ENCODE measurements at regions of chr9 and their contacts with region 1.

Region 1: GRCh38 chr9:76458903-76459690 is at the start of gene GCNT1:
- DNase-seq: peak; percentile 97
- H3K4me3 ChIP-seq: peak within 1 kb of the TSS; percentile 63 to 81 (median 70)
- H3K27ac ChIP-seq: peak within 1 kb of the TSS; percentile 71 to 87 (median 84)
- H3K4me1 ChIP-seq: peaks cover 0 to 49% (median 27%) of the 10 kb centered on the region in 4 donors
- H3K27me3 ChIP-seq: no peaks in the 10 kb centered on the region
- CTCF ChIP-seq: peak in 4 of 5 experiments; percentile 32 to 63 (median 36)
- EP300 ChIP-seq: no peak
- POLR2A ChIP-seq: peak; percentile 91
- total RNA-seq, gene GCNT1: 12.7 to 52.0 (median 27.8) TPM

Region 2: DNA sequence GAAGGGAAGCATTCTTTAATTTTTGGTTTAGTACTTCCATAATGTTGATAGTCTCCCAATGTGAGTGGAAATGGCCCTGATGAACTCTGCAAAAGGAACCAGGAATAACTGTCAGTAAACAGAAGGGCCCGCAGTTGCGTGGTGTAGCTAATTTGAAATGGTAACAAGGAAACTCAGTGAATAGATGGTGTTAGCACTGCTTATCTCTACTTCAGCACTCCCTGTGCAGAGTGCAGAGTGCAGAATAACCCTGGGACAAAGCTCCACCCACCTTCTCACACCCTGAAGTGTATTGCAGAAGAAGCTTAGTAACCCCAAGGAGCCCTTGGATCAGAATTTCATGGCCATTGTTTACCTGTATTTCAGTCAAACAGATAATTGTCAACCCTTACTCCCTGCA is 409.8 kb before region 1 on chr9:
- in situ Hi-C with region 1: no loop called
- intact Hi-C with region 1: no loop called
- DNase-seq: peak; percentile 80
- H3K4me3 ChIP-seq: no peak overlapping the region
- H3K27ac ChIP-seq: peak overlapping the region; percentile 49 to 78 (median 64)
- H3K4me1 ChIP-seq: peaks cover 0 to 33% (median 11%) of the 10 kb centered on the region in 4 donors
- H3K27me3 ChIP-seq: no peaks in the 10 kb centered on the region
- CTCF ChIP-seq: no peak
- EP300 ChIP-seq: no peak
- POLR2A ChIP-seq: no peak

Region 3: DNA sequence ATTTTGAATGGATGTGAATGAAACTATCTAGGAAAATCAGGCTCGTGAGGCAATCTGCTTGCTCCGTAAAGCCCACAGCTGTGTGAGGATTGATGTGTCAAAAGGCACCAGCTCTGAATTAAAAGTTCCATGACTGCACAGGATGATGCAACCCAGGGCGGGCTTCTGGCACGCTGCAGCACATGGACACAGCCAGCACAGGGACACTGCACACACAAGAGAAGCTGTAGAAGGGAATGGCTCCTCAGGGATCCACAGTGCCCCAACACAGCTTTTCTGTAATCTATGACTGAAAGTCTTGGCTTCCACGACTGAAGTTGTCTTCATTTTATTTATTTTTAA is 150.9 kb after region 1 on chr9:
- in situ Hi-C with region 1: loop called in 1 of 4 experiments (anchors 25 kb)
- intact Hi-C with region 1: no loop called
- DNase-seq: peak; percentile 54
- H3K4me3 ChIP-seq: no peak overlapping the region
- H3K27ac ChIP-seq: peak overlapping the region in 2 of 4 donors; percentile 1 to 36
- H3K4me1 ChIP-seq: peaks cover 0 to 24% (median 13%) of the 10 kb centered on the region in 4 donors
- H3K27me3 ChIP-seq: no peaks in the 10 kb centered on the region
- CTCF ChIP-seq: no peak
- EP300 ChIP-seq: no peak
- POLR2A ChIP-seq: no peak

Region 4: GRCh38 chr9:76704593-76705204 is 245.6 kb after region 1 on chr9:
- in situ Hi-C with region 1: no loop called
- intact Hi-C with region 1: loop called (anchors 10 kb)
- DNase-seq: no peak
- H3K4me3 ChIP-seq: no peak overlapping the region
- H3K27ac ChIP-seq: no peak overlapping the region
- H3K4me1 ChIP-seq: peaks cover 0 to 2% (median 0%) of the 10 kb centered on the region in 4 donors
- H3K27me3 ChIP-seq: peaks cover 11% of the 10 kb centered on the region
- CTCF ChIP-seq: peak; percentile 54 to 75 (median 58)
- EP300 ChIP-seq: no peak
- POLR2A ChIP-seq: no peak

Region 5: GRCh38 chr9:76996700-76997099 is 537.6 kb after region 1 on chr9:
- in situ Hi-C with region 1: loop called in 1 of 4 experiments (anchors 25 kb)
- intact Hi-C with region 1: loop called (anchors 10 kb)
- DNase-seq: no peak
- H3K4me3 ChIP-seq: no peak overlapping the region
- H3K27ac ChIP-seq: no peak overlapping the region
- H3K4me1 ChIP-seq: no peaks in the 10 kb centered on the region
- H3K27me3 ChIP-seq: peaks cover 17% of the 10 kb centered on the region
- CTCF ChIP-seq: peak; percentile 30 to 49 (median 45)
- EP300 ChIP-seq: no peak
- POLR2A ChIP-seq: no peak

Region 6: GRCh38 chr9:77011973-77012821 is 553.1 kb after region 1 on chr9:
- in situ Hi-C with region 1: loop called in 1 of 4 experiments (anchors 25 kb)
- intact Hi-C with region 1: no loop called
- DNase-seq: peak; percentile 71
- H3K4me3 ChIP-seq: peak overlapping the region in 1 of 4 donors; percentile 18
- H3K27ac ChIP-seq: no peak overlapping the region
- H3K4me1 ChIP-seq: peaks cover 0 to 33% (median 15%) of the 10 kb centered on the region in 4 donors
- H3K27me3 ChIP-seq: peaks cover 100% of the 10 kb centered on the region
- CTCF ChIP-seq: peak; percentile 68 to 89 (median 80)
- EP300 ChIP-seq: no peak
- POLR2A ChIP-seq: no peak